ENCODE measurements at regions of chr3 and their contacts with region 1.

Region 1: DNA sequence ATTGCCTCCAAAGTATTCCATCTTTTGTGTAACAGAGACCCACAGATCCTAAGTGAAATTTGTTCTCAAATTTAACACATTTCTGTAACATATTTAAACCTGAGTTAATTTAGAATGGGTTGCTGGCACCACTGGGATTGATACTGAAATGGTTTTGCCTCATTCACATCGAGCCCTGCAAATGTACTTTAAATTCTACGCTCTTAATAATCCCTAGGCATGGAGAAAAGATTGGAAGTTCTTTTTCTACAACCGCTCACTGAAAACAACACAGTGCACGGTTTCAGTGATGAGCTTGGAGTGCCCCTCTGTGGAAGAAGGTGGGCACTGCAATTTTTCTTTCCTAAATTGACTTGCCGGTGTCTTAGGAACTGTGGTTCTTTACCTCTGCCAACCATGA is 109.9 kb upstream of the ATP11B start:
- DNase-seq: peak; percentile 72
- ATAC-seq: peak; percentile 80
- H3K4me3 Mint-ChIP-seq: peak overlapping the region; percentile 51
- H3K27ac Mint-ChIP-seq: no peak overlapping the region
- H3K4me1 Mint-ChIP-seq: peaks cover 8% of the 10 kb centered on the region
- H3K27me3 Mint-ChIP-seq: peaks cover 22% of the 10 kb centered on the region
- CTCF ChIP-seq: peak; percentile 96

Region 2: DNA sequence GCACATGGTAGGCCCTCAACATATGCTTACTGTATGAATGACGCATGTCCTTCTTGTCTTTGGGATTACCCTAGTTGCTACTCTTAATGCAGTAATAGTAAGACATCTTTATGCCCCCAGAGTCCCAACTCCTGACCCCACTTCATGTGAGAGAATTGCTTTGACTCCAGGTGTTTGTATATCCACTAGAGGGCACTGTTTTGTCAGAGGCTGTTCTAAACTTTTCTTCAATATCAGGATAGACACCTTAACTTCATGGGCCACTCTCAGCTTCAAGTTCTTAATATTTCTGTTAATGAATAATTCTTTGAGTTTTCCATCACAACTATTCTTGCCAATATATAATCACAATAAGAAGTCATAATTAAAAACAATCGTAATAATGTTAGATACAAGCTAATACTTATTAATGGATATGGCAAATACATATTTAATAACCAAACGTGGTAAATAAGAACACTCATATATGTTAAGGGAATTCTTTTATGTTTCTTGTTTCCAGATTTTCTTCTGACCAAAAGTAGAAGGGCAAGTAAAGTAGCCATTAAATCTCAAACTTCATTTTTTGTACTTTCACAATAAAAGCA is 1356.7 kb before region 1 on chr3:
- CTCF ChIA-PET with region 1: interaction called, 10 read pairs
- POLR2A ChIA-PET with region 1: no interaction called
- intact Hi-C with region 1: no loop called
- DNase-seq: peak; percentile 2
- ATAC-seq: no peak
- H3K4me3 Mint-ChIP-seq: no peak overlapping the region
- H3K27ac Mint-ChIP-seq: no peak overlapping the region
- H3K4me1 Mint-ChIP-seq: no peaks in the 10 kb centered on the region
- H3K27me3 Mint-ChIP-seq: peaks cover 1% of the 10 kb centered on the region
- CTCF ChIP-seq: peak; percentile 54

Region 3: GRCh38 chr3:181709537-181710279 is 973.7 kb before region 1 on chr3:
- CTCF ChIA-PET with region 1: interaction called, 10 read pairs
- POLR2A ChIA-PET with region 1: no interaction called
- intact Hi-C with region 1: loop called (anchors 2 kb)
- DNase-seq: peak; percentile 81
- ATAC-seq: no peak
- H3K4me3 Mint-ChIP-seq: no peak overlapping the region
- H3K27ac Mint-ChIP-seq: no peak overlapping the region
- H3K4me1 Mint-ChIP-seq: peaks cover 3% of the 10 kb centered on the region
- H3K27me3 Mint-ChIP-seq: peaks cover 48% of the 10 kb centered on the region
- CTCF ChIP-seq: peak; percentile 93

Region 4: DNA sequence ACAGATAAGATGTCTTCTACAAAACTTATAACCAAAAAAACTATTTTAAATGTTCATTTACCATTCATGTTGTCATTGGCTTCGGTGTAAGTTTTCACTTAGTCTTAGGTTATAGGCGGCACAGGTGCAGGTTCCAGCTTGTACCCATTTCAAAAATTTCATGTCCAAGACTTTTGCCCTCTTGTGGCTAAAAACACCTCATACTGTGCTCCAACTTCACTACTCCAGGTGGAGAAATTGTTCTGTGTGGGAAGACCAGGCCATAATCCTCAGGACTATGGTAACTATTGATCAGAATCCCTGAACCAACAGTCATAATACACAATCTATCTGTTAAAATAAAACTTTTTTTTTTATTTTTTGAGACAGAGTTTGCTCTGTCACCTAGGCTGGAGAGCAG is 14.6 kb after region 1 on chr3:
- CTCF ChIA-PET with region 1: interaction called, 11 read pairs
- POLR2A ChIA-PET with region 1: interaction called, 3 read pairs
- intact Hi-C with region 1: no loop called
- DNase-seq: no peak
- ATAC-seq: no peak
- H3K4me3 Mint-ChIP-seq: no peak overlapping the region
- H3K27ac Mint-ChIP-seq: no peak overlapping the region
- H3K4me1 Mint-ChIP-seq: peaks cover 6% of the 10 kb centered on the region
- H3K27me3 Mint-ChIP-seq: peaks cover 2% of the 10 kb centered on the region
- CTCF ChIP-seq: no peak

Region 5: GRCh38 chr3:183349421-183350157 is 666.1 kb after region 1 on chr3:
- CTCF ChIA-PET with region 1: no interaction called
- POLR2A ChIA-PET with region 1: no interaction called
- intact Hi-C with region 1: no loop called
- DNase-seq: no peak
- ATAC-seq: peak; percentile 48
- H3K4me3 Mint-ChIP-seq: peak overlapping the region; percentile 49
- H3K27ac Mint-ChIP-seq: peak overlapping the region; percentile 78
- H3K4me1 Mint-ChIP-seq: peaks cover 22% of the 10 kb centered on the region
- H3K27me3 Mint-ChIP-seq: peaks cover 5% of the 10 kb centered on the region
- CTCF ChIP-seq: no peak